ENCODE measurements at regions of chr11 and their contacts with region 1.

Region 1: GRCh38 chr11:30917859-30918478 is 331.8 kb upstream of the MPPED2 start:
- DNase-seq: peak in 3 of 9 donors; percentile 1 to 9 (median 4)
- ATAC-seq: peak; percentile 30
- H3K4me3 ChIP-seq: no peak overlapping the region
- H3K4me3 Mint-ChIP-seq: no peak overlapping the region
- H3K27ac ChIP-seq: no peak overlapping the region
- H3K27ac Mint-ChIP-seq: no peak overlapping the region
- H3K4me1 ChIP-seq: no peaks in the 10 kb centered on the region
- H3K4me1 Mint-ChIP-seq: peaks cover 0 to 3% (median 0%) of the 10 kb centered on the region in 7 donors
- H3K27me3 ChIP-seq: no peaks in the 10 kb centered on the region
- H3K27me3 Mint-ChIP-seq: peaks cover 4 to 21% (median 12%) of the 10 kb centered on the region in 5 donors

Region 2: GRCh38 chr11:29343465-29344333 is 1574.3 kb before region 1 on chr11:
- CTCF ChIA-PET with region 1: no interaction called
- POLR2A ChIA-PET with region 1: no interaction called
- intact Hi-C with region 1: loop called in 1 of 2 experiments (anchors 5 kb)
- DNase-seq: peak in 2 of 9 donors; percentile 5 to 27
- ATAC-seq: no peak
- H3K4me3 ChIP-seq: no peak overlapping the region
- H3K4me3 Mint-ChIP-seq: no peak overlapping the region
- H3K27ac ChIP-seq: no peak overlapping the region
- H3K27ac Mint-ChIP-seq: no peak overlapping the region
- H3K4me1 ChIP-seq: no peaks in the 10 kb centered on the region
- H3K4me1 Mint-ChIP-seq: no peaks in the 10 kb centered on the region
- H3K27me3 ChIP-seq: no peaks in the 10 kb centered on the region
- H3K27me3 Mint-ChIP-seq: no peaks in the 10 kb centered on the region

Region 3: DNA sequence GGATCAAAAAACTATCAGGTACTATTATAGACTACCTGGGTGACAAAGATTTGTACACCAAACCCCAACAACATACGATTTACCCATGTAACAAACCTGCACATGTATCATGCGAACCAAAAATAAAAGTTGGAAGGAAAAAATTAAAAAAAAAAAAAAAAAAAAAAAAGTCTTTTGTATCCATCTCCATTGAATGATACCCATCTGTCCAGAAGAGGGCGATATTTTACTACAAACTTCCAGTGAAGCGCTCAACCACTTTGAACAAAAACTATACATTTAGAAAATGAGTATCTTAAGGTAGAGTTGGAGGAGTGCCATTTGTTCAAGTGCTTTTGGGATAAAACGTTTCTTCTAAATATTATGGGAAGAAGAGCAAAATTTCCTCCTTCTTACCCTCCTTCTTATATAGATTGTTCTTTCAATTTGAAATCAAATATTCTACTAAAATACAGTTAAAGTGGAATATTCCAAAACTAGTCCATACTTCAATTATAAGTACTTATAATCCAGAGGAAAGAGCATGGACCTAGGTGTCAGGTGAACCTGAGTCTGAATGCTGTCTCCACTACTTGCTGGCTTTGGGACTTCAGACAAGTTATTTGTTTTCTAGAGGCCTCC is 571.8 kb before region 1 on chr11:
- CTCF ChIA-PET with region 1: no interaction called
- POLR2A ChIA-PET with region 1: no interaction called
- intact Hi-C with region 1: loop called in 1 of 2 experiments (anchors 1 kb)
- DNase-seq: peak in 7 of 9 donors; percentile 29 to 58 (median 39)
- ATAC-seq: peak; percentile 75
- H3K4me3 ChIP-seq: no peak overlapping the region
- H3K4me3 Mint-ChIP-seq: no peak overlapping the region
- H3K27ac ChIP-seq: no peak overlapping the region
- H3K27ac Mint-ChIP-seq: no peak overlapping the region
- H3K4me1 ChIP-seq: no peaks in the 10 kb centered on the region
- H3K4me1 Mint-ChIP-seq: peaks cover 0 to 17% (median 9%) of the 10 kb centered on the region in 7 donors
- H3K27me3 ChIP-seq: no peaks in the 10 kb centered on the region
- H3K27me3 Mint-ChIP-seq: peaks cover 0 to 12% (median 0%) of the 10 kb centered on the region in 5 donors